Astrocyte of the spinal cord (primary cell): ENCODE measurements at regions of chr18 and their contacts with region 1.

Region 1: GRCh38 chr18:3604498-3605408 is 154.8 kb downstream of the TGIF1 start:
- DNase-seq: peak; percentile 95
- H3K4me3 ChIP-seq: peak overlapping the region; percentile 47
- CTCF ChIP-seq: no peak

Region 2: GRCh38 chr18:3297025-3297984 is 307.4 kb before region 1 on chr18:
- in situ Hi-C with region 1: loop called (anchors 25 kb)
- DNase-seq: peak; percentile 93
- H3K4me3 ChIP-seq: peak overlapping the region; percentile 65
- CTCF ChIP-seq: peak; percentile 66

Region 3: DNA sequence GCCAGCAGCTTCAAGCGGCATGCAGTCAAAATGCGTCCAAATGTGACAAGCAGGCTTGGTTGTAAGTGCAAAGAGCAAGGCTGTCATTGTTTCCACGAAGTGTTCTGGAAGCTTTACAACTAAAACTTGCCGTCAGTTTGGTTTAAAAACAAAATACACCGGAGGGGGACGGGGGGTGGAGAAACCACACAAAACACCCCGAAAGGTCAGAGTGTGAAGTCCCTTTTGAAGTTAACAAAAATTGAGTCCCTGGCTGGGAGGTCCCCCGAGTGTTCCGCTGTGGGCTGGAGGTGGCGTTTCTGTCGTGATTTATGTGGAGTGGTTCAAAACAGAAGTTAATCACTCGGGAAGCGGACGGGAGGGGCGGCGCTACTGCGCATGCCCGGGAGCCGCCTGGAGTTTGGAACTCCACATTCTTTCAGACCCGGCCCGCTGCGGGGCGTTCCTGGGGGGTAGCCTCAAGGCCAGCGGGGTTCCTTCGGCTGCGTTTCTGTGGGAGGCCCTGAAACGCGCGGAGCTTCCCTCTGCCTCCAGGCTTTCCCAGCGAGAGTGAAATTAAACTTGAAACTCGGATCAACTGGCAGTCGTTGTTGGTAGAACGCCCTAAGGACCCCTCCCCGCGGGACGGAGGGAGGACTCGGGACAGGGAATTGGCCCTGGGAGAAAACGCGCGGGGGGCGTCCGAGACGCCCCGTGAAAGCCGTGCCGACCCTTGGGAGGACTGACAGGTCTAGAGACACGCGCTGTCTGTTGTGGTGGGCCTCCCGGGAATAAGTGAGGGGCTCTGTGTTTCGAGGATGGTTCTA is 153.4 kb before region 1 on chr18:
- in situ Hi-C with region 1: loop called (anchors 10 kb)
- DNase-seq: peak; percentile 96
- H3K4me3 ChIP-seq: peak overlapping the region; percentile 96
- CTCF ChIP-seq: no peak